ENCODE measurements at regions of chr6 and their contacts with region 1.

Region 1: GRCh38 chr6:28895134-28895812 is 28.5 kb downstream of the TRIM27 start:
- DNase-seq: peak; percentile 89
- H3K4me3 Mint-ChIP-seq: peak overlapping the region; percentile 90
- H3K27ac Mint-ChIP-seq: peak overlapping the region; percentile 100
- H3K4me1 Mint-ChIP-seq: peaks cover 25% of the 10 kb centered on the region
- H3K27me3 Mint-ChIP-seq: peaks cover 6% of the 10 kb centered on the region

Region 2: DNA sequence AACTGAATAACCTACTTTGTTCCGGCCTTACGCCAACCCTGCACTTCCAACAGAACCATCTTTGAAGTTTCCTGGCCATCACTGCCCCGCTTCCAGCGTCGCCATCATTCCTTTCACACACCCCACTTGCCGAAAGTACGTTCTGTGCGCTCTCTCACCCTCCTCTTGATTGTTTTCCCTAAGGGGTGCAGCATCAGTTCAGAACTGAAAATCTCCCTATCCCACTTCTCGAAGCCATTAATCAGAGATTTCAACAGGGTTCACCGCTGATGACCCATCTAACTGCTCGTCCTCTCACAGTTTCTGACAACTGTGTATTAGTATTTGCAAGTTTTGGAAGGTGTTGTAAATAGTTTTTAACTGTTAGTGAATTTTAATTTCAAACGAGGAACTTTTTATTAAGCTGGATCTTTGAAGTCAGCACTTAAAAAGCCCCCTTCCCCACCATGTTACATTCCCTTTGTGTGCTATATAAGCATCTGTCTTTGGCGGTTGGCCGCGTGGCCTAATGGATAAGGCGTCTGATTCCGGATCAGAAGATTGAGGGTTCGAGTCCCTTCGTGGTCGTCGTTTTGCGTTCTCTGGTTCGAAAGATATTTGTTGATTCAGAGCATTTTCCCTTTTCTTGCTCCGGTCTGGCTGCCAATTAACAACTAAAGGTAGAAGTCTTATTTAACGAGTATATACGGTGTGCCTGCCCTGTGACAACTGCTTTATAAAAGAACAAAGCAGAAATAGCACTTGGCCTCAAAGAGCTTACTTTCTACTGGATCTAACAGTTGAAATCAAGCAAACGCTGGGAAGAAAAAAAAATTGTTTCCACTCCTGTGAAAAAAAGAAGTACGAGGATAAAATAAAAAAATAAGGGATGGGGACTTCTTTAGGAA is 14.1 kb before region 1 on chr6:
- intact Hi-C with region 1: loop called (anchors 1 kb)
- DNase-seq: peak; percentile 30
- H3K4me3 Mint-ChIP-seq: peak overlapping the region; percentile 76
- H3K27ac Mint-ChIP-seq: peak overlapping the region; percentile 81
- H3K4me1 Mint-ChIP-seq: peaks cover 34% of the 10 kb centered on the region
- H3K27me3 Mint-ChIP-seq: peaks cover 36% of the 10 kb centered on the region